ENCODE measurements at regions of chr11 and their contacts with region 1.

Region 1: GRCh38 chr11:89327885-89328284 is 150.2 kb downstream of the TYR start:
- DNase-seq: no peak
- H3K4me3 Mint-ChIP-seq: no peak overlapping the region
- H3K27ac Mint-ChIP-seq: no peak overlapping the region
- H3K4me1 Mint-ChIP-seq: no peaks in the 10 kb centered on the region
- H3K27me3 Mint-ChIP-seq: no peaks in the 10 kb centered on the region
- CTCF ChIP-seq: no peak

Region 2: GRCh38 chr11:89275966-89276365 is 51.9 kb before region 1 on chr11:
- CTCF ChIA-PET with region 1: no interaction called
- intact Hi-C with region 1: no loop called
- DNase-seq: no peak
- H3K4me3 Mint-ChIP-seq: no peak overlapping the region
- H3K27ac Mint-ChIP-seq: no peak overlapping the region
- H3K4me1 Mint-ChIP-seq: no peaks in the 10 kb centered on the region
- H3K27me3 Mint-ChIP-seq: no peaks in the 10 kb centered on the region
- CTCF ChIP-seq: no peak

Region 3: GRCh38 chr11:89405629-89406028 is 77.7 kb after region 1 on chr11:
- CTCF ChIA-PET with region 1: no interaction called
- intact Hi-C with region 1: loop called (anchors 5 kb)
- DNase-seq: no peak
- H3K4me3 Mint-ChIP-seq: no peak overlapping the region
- H3K27ac Mint-ChIP-seq: no peak overlapping the region
- H3K4me1 Mint-ChIP-seq: no peaks in the 10 kb centered on the region
- H3K27me3 Mint-ChIP-seq: no peaks in the 10 kb centered on the region
- CTCF ChIP-seq: no peak

Region 4: DNA sequence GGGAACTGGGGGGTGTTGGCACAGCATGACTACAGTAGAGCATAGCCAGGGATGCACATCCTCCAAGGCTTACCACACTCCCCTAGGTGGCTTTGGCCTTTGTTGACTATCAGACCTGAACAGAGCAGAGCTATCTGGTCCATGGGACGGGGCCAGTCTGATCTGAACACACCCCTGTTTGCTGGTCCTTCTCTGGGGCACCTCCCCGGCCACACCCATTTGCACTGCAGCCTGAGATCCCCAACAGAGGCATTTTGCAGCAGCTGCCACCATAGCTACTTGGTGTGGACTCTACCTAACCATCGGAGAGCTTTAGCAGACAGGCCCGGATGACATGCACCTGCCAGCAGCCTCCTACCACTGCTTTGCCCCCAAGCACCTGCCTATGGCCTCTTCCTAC is 239.1 kb after region 1 on chr11:
- CTCF ChIA-PET with region 1: no interaction called
- intact Hi-C with region 1: no loop called
- DNase-seq: no peak
- H3K4me3 Mint-ChIP-seq: no peak overlapping the region
- H3K27ac Mint-ChIP-seq: no peak overlapping the region
- H3K4me1 Mint-ChIP-seq: no peaks in the 10 kb centered on the region
- H3K27me3 Mint-ChIP-seq: no peaks in the 10 kb centered on the region
- CTCF ChIP-seq: no peak

Measured in Calu3 (cell line).